Activated CD4-positive, alpha-beta memory T cell treated with anti-CD3 and anti-CD28 coated beads, Interleukin-2, amount 10 ng/mL, durations not matched to agents 7 days and 5 days (primary cell): ENCODE measurements at regions of chr9 and their contacts with region 1.

Region 1: GRCh38 chr9:137086531-137087408 is at the start of gene MAN1B1:
- DNase-seq: peak; percentile 100
- H3K4me3 Mint-ChIP-seq: peak within 1 kb of the TSS; percentile 89
- H3K27ac Mint-ChIP-seq: peak within 1 kb of the TSS; percentile 90
- H3K4me1 Mint-ChIP-seq: peaks cover 46% of the 10 kb centered on the region
- H3K27me3 Mint-ChIP-seq: no peaks in the 10 kb centered on the region
- total RNA-seq, gene MAN1B1: 51.4 to 51.9 TPM

Region 2: GRCh38 chr9:137046098-137046787 is 40.5 kb before region 1 on chr9 and contains the start of gene NPDC1:
- CTCF ChIA-PET with region 1: interaction called, 13 read pairs
- POLR2A ChIA-PET with region 1: no interaction called
- DNase-seq: peak; percentile 86
- H3K4me3 Mint-ChIP-seq: peak within 1 kb of the TSS; percentile 76
- H3K27ac Mint-ChIP-seq: peak within 1 kb of the TSS; percentile 65
- H3K4me1 Mint-ChIP-seq: peaks cover 29% of the 10 kb centered on the region
- H3K27me3 Mint-ChIP-seq: peaks cover 33% of the 10 kb centered on the region
- total RNA-seq, gene NPDC1: 82.8 to 89.2 TPM

Region 3: GRCh38 chr9:137070201-137070905 is 16.4 kb before region 1 on chr9 and contains the start of gene SAPCD2:
- CTCF ChIA-PET with region 1: interaction called, 73 read pairs
- POLR2A ChIA-PET with region 1: interaction called, 87 read pairs
- DNase-seq: peak; percentile 90
- H3K4me3 Mint-ChIP-seq: peak within 1 kb of the TSS; percentile 73
- H3K27ac Mint-ChIP-seq: peak within 1 kb of the TSS; percentile 63
- H3K4me1 Mint-ChIP-seq: peaks cover 37% of the 10 kb centered on the region
- H3K27me3 Mint-ChIP-seq: no peaks in the 10 kb centered on the region
- total RNA-seq, gene SAPCD2: 26.8 to 27.0 TPM

Region 4: DNA sequence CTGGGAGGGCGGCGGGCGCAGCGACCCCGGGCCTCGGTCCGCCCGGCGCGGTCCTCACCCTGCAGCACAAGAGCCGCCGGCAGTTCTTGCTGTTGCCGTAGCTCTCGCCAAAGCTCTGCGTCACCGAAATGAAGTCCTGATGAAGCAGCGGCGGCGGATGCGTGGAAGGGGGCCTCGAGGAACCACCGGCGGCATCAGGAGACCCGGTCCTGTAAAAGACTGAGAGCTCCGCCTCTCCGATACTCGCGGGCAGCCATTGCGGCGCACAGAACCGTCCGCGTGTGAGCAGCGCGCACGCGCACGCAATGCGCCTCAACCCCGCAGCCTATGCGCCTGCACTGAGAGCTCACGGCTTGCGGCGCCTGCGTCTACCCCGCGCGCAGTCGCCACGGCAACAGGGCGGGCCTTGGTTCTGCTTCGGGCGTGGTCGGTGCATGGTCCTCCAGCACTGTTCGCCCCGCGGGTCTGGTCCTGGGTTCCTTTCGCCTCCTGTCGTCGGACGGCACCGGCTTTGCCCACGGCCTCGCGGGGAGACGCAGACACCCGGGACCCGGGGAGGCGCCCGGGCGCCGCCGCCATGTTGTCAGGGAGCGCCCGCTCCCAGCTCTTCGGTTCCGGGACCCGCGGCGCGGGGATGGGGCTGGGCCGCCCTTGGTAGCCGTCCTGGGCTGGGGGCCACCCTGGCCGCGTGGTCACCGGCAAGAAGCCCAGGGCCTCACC is 42.8 kb after region 1 on chr9:
- CTCF ChIA-PET with region 1: interaction called, 11 read pairs
- POLR2A ChIA-PET with region 1: interaction called, 13 read pairs
- DNase-seq: peak; percentile 93
- H3K4me3 Mint-ChIP-seq: peak overlapping the region; percentile 81
- H3K27ac Mint-ChIP-seq: peak overlapping the region; percentile 83
- H3K4me1 Mint-ChIP-seq: peaks cover 30% of the 10 kb centered on the region
- H3K27me3 Mint-ChIP-seq: peaks cover 4% of the 10 kb centered on the region

Region 5: DNA sequence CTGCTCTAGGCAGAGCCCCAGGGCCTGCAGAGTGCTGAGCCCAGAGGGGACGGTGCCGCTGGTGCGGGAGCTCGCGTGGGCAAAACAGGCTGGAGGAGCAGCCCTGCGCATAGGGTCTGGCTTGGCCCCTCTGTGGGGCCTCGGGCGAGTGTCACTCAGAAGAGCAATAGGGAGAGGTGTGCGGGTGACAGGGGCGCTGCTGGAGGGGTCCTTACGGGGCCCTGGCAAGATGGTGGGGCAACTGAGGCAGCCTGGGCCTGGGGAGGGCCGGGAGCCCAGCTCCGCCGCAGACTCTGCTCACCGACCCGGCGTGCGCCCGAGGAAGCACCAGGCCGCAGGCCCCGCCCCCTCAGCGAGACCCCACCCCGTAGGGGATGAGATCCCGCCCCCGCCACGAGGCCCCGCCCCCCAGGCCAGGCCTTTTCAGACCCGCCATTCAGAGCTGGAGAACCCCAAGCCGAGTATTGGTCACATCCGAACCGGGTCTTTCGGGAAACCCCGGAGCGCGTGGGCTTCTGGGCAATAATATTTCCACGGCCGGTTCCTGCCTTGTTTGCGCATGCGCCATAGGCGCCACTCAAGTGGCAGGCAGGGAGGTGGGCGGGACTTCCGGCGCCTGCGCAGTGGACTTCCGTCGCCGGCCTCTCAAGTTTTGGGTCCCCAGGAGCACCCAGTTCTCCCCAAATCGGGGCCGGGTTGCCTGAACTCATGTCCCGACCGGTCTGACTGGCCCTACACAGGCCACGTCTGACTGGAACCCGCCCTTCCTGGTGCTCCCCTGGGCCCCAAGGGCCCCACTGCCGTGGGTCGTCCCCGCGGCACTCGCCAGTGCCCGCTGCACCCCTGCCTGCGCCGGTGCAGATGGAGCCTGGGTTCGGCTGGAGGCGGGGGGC is 136.6 kb after region 1 on chr9:
- CTCF ChIA-PET with region 1: interaction called, 3 read pairs
- POLR2A ChIA-PET with region 1: interaction called, 11 read pairs
- DNase-seq: peak; percentile 99
- H3K4me3 Mint-ChIP-seq: peak overlapping the region; percentile 74
- H3K27ac Mint-ChIP-seq: peak overlapping the region; percentile 79
- H3K4me1 Mint-ChIP-seq: peaks cover 27% of the 10 kb centered on the region
- H3K27me3 Mint-ChIP-seq: no peaks in the 10 kb centered on the region